ENCODE measurements at regions of chr3 and their contacts with region 1.

Region 1: DNA sequence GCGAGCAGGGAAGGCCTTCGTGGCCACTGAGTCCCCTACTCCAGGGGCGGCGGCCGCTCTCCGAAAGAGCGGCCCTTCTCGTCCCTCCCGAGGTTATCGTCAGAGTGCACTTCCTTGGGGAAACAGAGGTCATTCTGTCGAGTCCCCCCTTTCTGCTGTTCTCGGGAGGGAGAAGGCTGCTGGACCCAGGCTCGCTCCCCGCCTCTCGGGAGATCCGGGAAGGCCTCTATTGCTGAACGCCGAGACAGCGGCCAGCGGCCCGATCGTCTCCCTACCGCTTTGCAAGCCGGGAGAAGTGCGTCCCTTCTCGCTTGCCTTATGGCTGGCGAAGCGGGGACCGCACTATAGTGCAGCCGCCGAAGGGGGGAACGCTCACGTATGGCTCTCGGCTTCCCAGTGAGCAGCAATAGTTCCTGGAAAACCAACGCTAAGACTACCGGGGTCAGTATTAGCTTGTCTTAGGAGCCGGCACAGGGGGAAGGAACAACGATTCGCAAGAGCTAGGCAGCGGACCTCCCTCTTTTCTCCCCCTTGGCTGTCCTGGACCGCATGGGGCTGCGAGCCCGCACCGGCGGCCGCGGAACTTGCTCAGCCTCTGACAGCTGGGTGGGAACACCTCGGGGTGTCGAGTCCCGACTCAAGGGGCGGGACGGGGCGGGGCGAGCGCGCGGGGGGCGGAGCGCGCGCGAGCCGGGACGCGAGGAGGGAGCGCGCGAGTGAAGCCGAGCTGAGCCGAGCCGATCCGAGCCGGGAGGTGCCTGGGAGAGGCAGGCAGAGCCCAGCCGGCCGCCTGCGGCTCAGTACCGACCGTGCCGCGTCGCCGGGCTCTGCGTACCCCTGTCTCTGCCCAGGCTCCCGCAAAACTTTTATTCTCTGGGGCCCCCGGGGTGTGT is 930 bp upstream of the PPM1L start:
- DNase-seq: peak; percentile 95
- H3K4me3 ChIP-seq: peak overlapping the region; percentile 87
- H3K27ac ChIP-seq: peak overlapping the region; percentile 92
- H3K4me1 ChIP-seq: peaks cover 14% of the 10 kb centered on the region
- H3K27me3 ChIP-seq: no peaks in the 10 kb centered on the region
- CTCF ChIP-seq: no peak

Region 2: DNA sequence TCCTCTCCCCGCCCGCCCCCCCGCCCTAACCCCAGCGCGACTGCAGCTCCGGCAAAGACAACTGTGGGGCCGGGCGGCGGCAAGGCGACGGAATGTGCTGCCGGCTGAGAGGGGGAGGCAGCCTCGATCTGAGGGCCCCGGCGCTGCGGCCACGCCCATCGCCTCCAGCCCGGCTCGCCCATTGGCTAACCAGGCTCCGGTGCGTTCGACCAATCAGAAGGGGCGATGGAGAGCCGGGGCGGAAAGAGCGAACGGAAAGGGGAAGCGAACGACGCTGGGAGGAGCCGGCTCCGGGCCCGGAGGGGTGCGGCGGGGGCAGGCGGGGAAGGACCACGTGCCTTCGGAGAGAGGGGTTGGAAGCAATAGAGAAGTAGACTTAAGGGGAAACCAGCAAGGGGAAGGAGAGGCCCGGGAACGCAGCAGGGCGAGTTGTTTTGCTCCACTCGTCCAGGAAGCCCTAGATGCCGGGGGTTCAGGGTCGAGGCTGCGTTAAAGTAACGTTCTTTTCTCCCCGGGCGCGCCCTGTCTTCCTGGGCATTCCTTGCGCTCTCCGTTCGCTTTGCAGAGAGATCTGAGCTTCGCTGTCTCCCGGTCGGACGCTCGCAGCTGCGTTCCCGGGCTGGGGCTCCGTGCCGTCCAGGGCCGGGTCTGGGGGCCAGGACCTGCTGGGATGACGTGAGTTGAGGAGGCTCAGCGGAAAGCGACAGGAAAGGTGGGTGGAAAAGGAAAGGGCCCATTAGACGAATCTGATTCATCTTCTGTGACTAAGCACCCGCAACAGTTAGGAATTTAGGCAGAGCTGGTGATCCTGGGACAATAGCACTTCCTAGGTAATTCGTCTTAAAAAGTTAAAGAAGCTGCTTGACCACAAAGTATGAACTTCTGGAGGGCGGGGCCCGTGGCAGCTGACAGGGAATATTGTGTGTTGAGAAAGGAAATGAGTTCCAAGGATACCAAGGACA is 189.4 kb before region 1 on chr3 and contains the start of gene KPNA4:
- CTCF ChIA-PET with region 1: no interaction called
- POLR2A ChIA-PET with region 1: no interaction called
- intact Hi-C with region 1: loop called (anchors 5 kb)
- DNase-seq: peak; percentile 98
- H3K4me3 ChIP-seq: peak within 1 kb of the TSS; percentile 60
- H3K27ac ChIP-seq: peak within 1 kb of the TSS; percentile 91
- H3K4me1 ChIP-seq: peaks cover 28% of the 10 kb centered on the region
- H3K27me3 ChIP-seq: no peaks in the 10 kb centered on the region
- CTCF ChIP-seq: no peak
- total RNA-seq, gene KPNA4: 85.7 and 88.5 TPM in 2 replicates